ENCODE measurements at regions of chr10 and their contacts with region 1.

Region 1: GRCh38 chr10:43436400-43437140 is at the start of gene ZNF487:
- DNase-seq: peak; percentile 50
- ATAC-seq: peak; percentile 97
- H3K4me3 ChIP-seq: peak within 1 kb of the TSS; percentile 56 to 83
- H3K27ac ChIP-seq: peak within 1 kb of the TSS; percentile 78
- H3K4me1 ChIP-seq: 0 out of 2 replicates have a peak, but pooled peaks cover 3% of the 10 kb centered on the region
- H3K27me3 ChIP-seq: no peaks in the 10 kb centered on the region
- CTCF ChIP-seq: no peak
- total RNA-seq, gene ZNF487: 7.6 TPM

Region 2: DNA sequence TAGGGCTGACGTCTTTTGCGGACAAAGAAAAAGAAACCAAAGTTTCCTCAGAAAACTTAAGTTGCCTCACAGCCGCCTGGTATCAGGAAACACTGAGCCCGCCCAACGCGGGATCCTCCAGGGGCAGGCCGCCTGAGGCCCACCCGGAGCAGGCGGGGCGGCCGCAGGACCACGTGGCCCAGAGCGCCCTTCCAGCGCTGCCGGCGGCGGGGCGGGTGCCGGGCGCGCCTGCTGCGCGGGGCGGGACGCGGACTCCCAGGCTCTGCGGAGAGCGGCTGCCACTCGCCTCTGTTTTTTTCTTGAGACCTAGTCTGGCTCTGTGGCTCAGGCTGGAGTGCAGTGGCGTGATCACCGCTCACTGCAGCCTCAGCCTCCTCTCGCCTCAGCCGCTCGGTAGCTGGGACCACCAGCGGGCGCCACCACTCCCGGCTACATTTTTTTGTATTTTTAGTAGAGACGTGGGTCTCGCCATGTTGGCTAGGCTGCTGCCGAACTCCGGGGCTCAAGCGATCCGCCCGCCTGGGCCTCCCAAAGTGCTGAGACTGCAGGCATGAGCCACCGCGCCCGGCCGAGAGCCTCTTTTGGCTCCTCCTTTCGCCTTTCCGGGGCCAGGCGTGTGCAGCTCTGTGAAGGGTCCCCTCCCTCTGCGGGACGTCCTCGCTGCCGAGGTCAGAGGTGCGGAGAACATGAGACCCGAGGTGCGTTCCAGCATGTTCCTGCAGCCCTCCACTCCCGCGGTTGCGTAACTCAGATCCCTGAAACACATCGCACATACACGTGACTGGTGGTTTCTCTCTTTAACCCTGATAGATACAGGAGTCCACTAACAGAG is 16.0 kb before region 1 on chr10:
- CTCF ChIA-PET with region 1: no interaction called
- POLR2A ChIA-PET with region 1: interaction called, 20 read pairs
- in situ Hi-C with region 1: no loop called
- intact Hi-C with region 1: no loop called
- DNase-seq: no peak
- ATAC-seq: peak; percentile 97
- H3K4me3 ChIP-seq: peak overlapping the region; percentile 46 to 67
- H3K27ac ChIP-seq: peak overlapping the region; percentile 98
- H3K4me1 ChIP-seq: peaks cover 13% of the 10 kb centered on the region
- H3K27me3 ChIP-seq: no peaks in the 10 kb centered on the region
- CTCF ChIP-seq: no peak

Region 3: DNA sequence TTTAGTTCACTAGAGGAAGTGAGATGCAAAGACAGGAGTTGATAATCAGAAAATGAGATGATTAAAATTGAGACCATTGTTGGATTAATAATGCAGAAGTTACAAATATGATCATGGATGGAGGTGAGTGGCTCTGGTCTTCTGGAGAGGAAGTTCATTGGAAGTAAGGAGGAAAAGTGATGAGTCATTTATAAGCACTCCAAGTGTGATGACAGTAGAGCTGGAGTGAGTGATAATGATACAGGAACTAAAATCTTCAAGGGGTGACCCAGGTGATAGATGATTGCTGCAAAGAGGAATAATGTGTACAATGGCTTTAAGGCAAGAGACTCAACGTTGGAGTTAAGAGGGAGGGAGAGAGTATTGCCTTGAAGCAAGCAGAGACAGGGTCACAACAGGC is 191.4 kb after region 1 on chr10:
- CTCF ChIA-PET with region 1: no interaction called
- POLR2A ChIA-PET with region 1: no interaction called
- in situ Hi-C with region 1: no loop called
- intact Hi-C with region 1: no loop called
- DNase-seq: no peak
- ATAC-seq: no peak
- H3K4me3 ChIP-seq: no peak overlapping the region
- H3K27ac ChIP-seq: no peak overlapping the region
- H3K4me1 ChIP-seq: no peaks in the 10 kb centered on the region
- H3K27me3 ChIP-seq: no peaks in the 10 kb centered on the region
- CTCF ChIP-seq: no peak